Heart right ventricle (tissue), 16 donors: ENCODE measurements at regions of chr6 and their contacts with region 1.

Region 1: DNA sequence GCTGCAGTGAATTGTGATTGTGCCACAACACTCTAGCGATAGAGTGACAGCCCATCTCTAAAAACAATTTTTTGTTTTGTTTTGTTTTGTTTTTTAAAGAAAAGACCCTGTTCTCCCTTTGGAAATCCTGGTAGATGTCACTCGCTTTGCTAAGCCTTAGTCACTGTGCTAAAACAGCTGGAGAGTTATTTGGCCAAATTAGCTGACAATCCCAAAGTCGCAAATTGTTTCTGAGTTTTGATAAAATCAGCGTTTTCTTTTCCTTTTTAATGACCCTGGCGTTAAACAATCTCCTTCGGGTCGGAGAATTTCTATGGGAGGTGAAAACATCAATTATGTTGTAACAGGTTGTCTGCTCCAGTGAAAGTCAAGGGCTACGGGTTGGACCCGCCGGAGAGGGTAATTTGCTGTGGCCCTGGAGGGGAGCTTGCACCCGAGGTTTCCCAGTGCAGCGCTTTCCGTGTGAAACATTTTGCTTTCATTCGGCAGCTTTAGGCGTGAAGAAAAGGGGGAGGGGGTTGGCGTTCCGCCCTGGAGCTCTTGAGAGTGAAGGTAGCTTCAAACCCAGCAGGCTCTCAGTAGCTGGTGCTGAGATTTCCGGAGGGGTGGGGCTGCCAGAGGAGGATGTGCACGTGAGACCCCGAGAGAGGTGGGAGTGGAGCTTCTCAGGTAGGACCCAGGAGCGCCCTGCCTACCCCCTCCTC is 296.6 kb downstream of the PHACTR1 start:
- DNase-seq: peak; percentile 52 to 69
- ATAC-seq: peak; percentile 15 to 58 (median 40)
- H3K4me3 ChIP-seq: peak overlapping the region; percentile 7 to 78 (median 70)
- H3K27ac ChIP-seq: peak overlapping the region in 9 of 10 donors; percentile 51 to 90 (median 77)
- H3K4me1 ChIP-seq: peaks cover 9 to 40% (median 29%) of the 10 kb centered on the region in 9 donors
- H3K27me3 ChIP-seq: peaks cover 0 to 28% (median 0%) of the 10 kb centered on the region in 7 donors
- CTCF ChIP-seq: no peak

Region 2: GRCh38 chr6:12957321-12958051 is 55.6 kb before region 1 on chr6:
- intact Hi-C with region 1: loop called in 5 of 10 experiments (anchors 5 kb)
- DNase-seq: peak; percentile 70 to 75
- ATAC-seq: peak; percentile 83 to 90 (median 89)
- H3K4me3 ChIP-seq: peak overlapping the region; percentile 23 to 79 (median 72)
- H3K27ac ChIP-seq: peak overlapping the region; percentile 31 to 93 (median 86)
- H3K4me1 ChIP-seq: peaks cover 0 to 51% (median 22%) of the 10 kb centered on the region in 9 donors
- H3K27me3 ChIP-seq: no peaks in the 10 kb centered on the region
- CTCF ChIP-seq: peak in 4 of 9 donors; percentile 15 to 54 (median 46)

Region 3: DNA sequence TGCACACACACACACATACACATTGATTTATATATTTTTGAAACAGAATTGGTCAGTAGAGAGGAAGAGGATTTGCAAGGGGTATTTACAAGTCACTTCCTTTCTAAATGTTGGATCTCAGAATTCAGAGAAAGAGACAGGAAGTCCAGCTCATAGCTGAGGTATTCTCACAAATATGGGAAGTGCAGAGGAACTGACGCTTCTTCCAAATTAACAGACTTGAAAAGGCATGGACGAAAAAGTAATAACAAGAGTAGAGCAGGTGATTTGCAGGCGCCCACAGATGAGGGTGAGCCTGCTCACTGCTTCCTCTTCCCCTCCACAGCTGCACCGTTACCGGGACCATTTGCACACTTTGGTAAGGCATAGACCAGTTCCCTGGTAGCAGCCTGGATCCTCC is 50.1 kb before region 1 on chr6:
- intact Hi-C with region 1: loop called in 5 of 10 experiments (anchors 5 kb)
- DNase-seq: no peak
- ATAC-seq: peak in 7 of 8 donors; percentile 26 to 65 (median 43)
- H3K4me3 ChIP-seq: peak overlapping the region in 9 of 10 donors; percentile 4 to 30 (median 23)
- H3K27ac ChIP-seq: peak overlapping the region; percentile 38 to 91 (median 78)
- H3K4me1 ChIP-seq: peaks cover 0 to 53% (median 37%) of the 10 kb centered on the region in 9 donors
- H3K27me3 ChIP-seq: no peaks in the 10 kb centered on the region
- CTCF ChIP-seq: no peak

Region 4: DNA sequence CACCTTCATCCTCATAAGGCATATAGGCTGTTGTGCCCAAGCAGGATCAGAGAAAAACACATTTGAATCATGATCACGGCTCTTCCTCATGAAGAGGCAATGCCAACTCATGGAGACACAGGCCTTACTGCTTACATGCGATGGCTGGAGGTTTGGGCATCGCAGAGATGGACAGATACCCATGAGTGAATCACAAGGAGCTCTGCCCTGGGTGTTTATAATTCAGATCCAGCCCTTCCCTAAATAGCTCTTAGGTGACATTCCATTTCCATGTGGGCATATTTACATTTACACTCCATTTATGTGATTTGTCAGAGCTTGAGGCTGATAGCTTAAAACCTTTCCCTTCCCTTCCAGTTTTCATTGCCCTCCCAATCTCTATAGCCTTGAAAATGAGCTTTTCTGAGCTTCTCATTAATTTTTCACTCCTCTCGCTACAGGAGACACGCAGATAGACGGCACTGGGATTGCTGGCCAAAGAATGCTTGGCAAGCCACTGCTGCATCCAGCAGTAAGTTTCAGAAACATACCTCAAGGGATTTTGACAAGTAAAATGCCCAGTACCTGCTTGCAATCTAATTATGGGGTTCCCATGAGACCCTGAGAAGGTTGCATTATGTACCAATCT is 66.1 kb after region 1 on chr6:
- intact Hi-C with region 1: loop called in 1 of 10 experiments (anchors 5 kb)
- DNase-seq: no peak
- ATAC-seq: peak in 5 of 8 donors; percentile 28 to 49 (median 43)
- H3K4me3 ChIP-seq: no peak overlapping the region
- H3K27ac ChIP-seq: peak overlapping the region in 7 of 10 donors; percentile 2 to 66 (median 56)
- H3K4me1 ChIP-seq: peaks cover 16 to 71% (median 54%) of the 10 kb centered on the region in 9 donors
- H3K27me3 ChIP-seq: no peaks in the 10 kb centered on the region
- CTCF ChIP-seq: no peak

Region 5: DNA sequence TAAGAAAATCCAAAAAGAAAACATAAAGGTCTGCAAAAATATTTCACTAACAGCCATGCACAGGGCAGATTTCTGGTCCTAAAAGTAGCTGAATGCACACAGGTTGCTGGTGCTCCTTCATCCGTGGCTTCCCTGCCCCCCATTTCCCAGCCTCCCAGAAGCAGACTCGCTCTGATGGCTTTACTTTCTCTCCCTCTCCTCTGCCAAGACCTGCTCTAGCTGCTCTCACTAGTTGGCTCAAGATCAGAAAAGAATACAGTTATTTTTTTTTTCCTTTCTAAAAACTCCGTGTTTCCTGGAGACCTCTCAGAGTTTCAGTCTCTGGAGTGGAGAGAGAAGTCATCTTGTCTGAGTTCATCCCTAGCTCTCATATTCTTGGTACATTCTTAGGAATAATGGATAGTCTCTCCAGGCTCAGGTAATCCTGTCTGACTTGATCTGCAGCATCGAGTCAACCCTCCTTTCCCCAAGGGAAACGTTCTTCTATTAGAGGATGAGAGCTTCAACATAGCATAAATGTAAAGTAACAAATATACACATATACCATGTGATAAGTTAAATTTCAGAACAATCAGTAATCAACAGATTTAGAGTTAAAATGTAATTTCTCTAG is 101.0 kb after region 1 on chr6:
- intact Hi-C with region 1: loop called in 1 of 10 experiments (anchors 10 kb)
- DNase-seq: peak in 1 of 2 donors; percentile 9
- ATAC-seq: peak in 6 of 8 donors; percentile 42 to 77 (median 62)
- H3K4me3 ChIP-seq: peak overlapping the region in 1 of 10 donors; percentile 2
- H3K27ac ChIP-seq: no peak overlapping the region
- H3K4me1 ChIP-seq: peaks cover 0 to 32% (median 22%) of the 10 kb centered on the region in 9 donors
- H3K27me3 ChIP-seq: no peaks in the 10 kb centered on the region
- CTCF ChIP-seq: no peak

Region 6: GRCh38 chr6:13328076-13328874 is 315.1 kb after region 1 on chr6 and contains the start of gene TBC1D7:
- intact Hi-C with region 1: loop called in 1 of 10 experiments (anchors 5 kb)
- DNase-seq: peak; percentile 91 to 95
- ATAC-seq: peak; percentile 93 to 98 (median 96)
- H3K4me3 ChIP-seq: peak within 1 kb of the TSS; percentile 75 to 95 (median 82)
- H3K27ac ChIP-seq: peak within 1 kb of the TSS; percentile 71 to 98 (median 95)
- H3K4me1 ChIP-seq: peaks cover 0 to 45% (median 21%) of the 10 kb centered on the region in 9 donors
- H3K27me3 ChIP-seq: no peaks in the 10 kb centered on the region
- CTCF ChIP-seq: peak in 2 of 9 donors; percentile 15 to 17
- total RNA-seq, gene TBC1D7: 21.7 to 42.6 (median 28.6) TPM